Tibial artery (tissue), 4 donors: ENCODE measurements at regions of chr11 and their contacts with region 1.

Region 1: DNA sequence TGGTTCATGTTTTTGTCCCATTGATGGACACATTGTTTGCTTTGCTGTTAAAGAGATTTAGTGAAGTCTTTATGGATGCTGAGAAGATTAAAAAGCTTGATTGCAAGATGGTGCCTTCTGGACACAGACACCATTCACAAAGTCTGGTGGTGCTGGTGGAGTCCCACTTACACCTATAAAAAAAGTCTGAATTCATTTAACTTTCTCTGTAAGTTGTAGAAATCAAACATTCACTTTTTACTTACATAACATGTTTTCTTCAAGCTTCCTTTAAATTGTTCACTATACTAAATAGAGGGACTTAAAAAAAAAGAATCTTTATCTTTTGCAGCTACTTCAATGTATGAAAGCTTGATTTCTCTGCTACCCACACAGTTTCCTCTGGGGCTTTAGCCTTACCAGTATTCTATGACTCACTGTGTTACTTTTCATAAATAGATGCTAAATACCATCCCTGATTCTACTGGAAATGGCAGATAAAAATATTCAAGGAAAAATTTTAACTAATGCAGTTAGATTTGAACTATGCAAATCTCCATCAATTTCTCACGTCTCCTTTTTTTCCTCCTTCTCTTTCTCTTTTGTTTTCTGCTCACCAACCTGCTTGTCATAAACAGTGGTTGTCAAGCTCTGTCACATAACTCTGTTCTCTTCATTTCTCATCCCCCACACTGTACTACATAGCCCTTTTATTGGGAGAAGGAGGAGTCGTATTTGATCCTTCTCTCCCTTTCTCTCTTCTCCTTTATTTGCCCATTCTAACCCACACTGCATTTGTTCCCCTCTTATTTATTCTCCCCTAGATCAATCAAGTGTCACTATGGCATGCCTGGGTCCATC is 89.7 kb downstream of the FAM76B start:
- DNase-seq: no peak
- H3K4me3 ChIP-seq: no peak overlapping the region
- H3K27ac ChIP-seq: peak overlapping the region; percentile 55 to 81
- H3K4me1 ChIP-seq: peaks cover 0 to 77% (median 43%) of the 10 kb centered on the region in 4 donors
- H3K27me3 ChIP-seq: no peaks in the 10 kb centered on the region
- CTCF ChIP-seq: no peak

Region 2: DNA sequence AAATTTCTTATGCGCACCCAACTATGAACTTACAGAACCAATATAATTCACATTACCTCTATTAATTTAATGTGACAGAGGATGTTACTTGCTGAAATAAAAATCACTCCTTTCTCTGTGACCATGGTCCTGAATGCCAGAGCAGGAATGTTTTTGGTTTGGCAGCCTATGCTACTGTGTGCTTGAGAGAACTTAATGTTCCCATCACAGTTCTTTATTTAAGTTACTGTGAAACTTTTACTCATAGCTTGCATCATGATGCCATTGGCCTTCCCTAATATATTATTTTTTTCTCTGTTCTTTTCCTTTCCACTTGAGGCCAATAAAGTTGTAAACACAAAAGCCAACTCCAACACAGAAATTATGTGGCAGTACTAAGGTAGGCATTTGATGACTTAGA is 52.5 kb before region 1 on chr11:
- intact Hi-C with region 1: loop called (anchors 5 kb)
- DNase-seq: peak; percentile 54 to 68
- H3K4me3 ChIP-seq: no peak overlapping the region
- H3K27ac ChIP-seq: peak overlapping the region; percentile 83 to 85
- H3K4me1 ChIP-seq: peaks cover 0 to 73% (median 29%) of the 10 kb centered on the region in 4 donors
- H3K27me3 ChIP-seq: no peaks in the 10 kb centered on the region
- CTCF ChIP-seq: peak in 1 of 2 experiments; percentile 6